Thyroid gland (tissue), 4 donors: ENCODE measurements at regions of chr3 and their contacts with region 1.

Region 1: GRCh38 chr3:138686771-138687221 is 78.2 kb downstream of the FAIM start:
- DNase-seq: peak in 1 of 2 donors; percentile 15
- H3K4me3 ChIP-seq: no peak overlapping the region
- H3K27ac ChIP-seq: peak overlapping the region; percentile 39 to 72 (median 56)
- H3K4me1 ChIP-seq: peaks cover 6 to 36% of the 10 kb centered on the region in 2 donors
- H3K27me3 ChIP-seq: no peaks in the 10 kb centered on the region
- CTCF ChIP-seq: no peak
- POLR2A ChIP-seq: no peak

Region 2: GRCh38 chr3:138608322-138609135 is 78.3 kb before region 1 on chr3 and contains the start of gene FAIM:
- intact Hi-C with region 1: loop called (anchors 10 kb)
- DNase-seq: peak; percentile 78 to 80
- H3K4me3 ChIP-seq: peak within 1 kb of the TSS; percentile 1 to 83 (median 19)
- H3K27ac ChIP-seq: peak within 1 kb of the TSS; percentile 90 to 97 (median 94)
- H3K4me1 ChIP-seq: peaks cover 13 to 15% of the 10 kb centered on the region in 2 donors
- H3K27me3 ChIP-seq: no peaks in the 10 kb centered on the region
- CTCF ChIP-seq: no peak
- POLR2A ChIP-seq: peak in 1 of 2 donors; percentile 47
- total RNA-seq, gene FAIM: 12.6 to 26.6 (median 20.4) TPM